ENCODE measurements at regions of chr22 and their contacts with region 1.

Region 1: GRCh38 chr22:42419243-42419881 is 12.8 kb downstream of the NFAM1 start:
- DNase-seq: no peak
- ATAC-seq: no peak
- H3K4me3 ChIP-seq: no peak overlapping the region
- H3K4me3 Mint-ChIP-seq: no peak overlapping the region
- H3K27ac ChIP-seq: no peak overlapping the region
- H3K27ac Mint-ChIP-seq: no peak overlapping the region
- H3K4me1 ChIP-seq: no peaks in the 10 kb centered on the region
- H3K4me1 Mint-ChIP-seq: peaks cover 2% of the 10 kb centered on the region
- H3K27me3 ChIP-seq: no peaks in the 10 kb centered on the region
- H3K27me3 Mint-ChIP-seq: no peaks in the 10 kb centered on the region
- CTCF ChIP-seq: no peak

Region 2: DNA sequence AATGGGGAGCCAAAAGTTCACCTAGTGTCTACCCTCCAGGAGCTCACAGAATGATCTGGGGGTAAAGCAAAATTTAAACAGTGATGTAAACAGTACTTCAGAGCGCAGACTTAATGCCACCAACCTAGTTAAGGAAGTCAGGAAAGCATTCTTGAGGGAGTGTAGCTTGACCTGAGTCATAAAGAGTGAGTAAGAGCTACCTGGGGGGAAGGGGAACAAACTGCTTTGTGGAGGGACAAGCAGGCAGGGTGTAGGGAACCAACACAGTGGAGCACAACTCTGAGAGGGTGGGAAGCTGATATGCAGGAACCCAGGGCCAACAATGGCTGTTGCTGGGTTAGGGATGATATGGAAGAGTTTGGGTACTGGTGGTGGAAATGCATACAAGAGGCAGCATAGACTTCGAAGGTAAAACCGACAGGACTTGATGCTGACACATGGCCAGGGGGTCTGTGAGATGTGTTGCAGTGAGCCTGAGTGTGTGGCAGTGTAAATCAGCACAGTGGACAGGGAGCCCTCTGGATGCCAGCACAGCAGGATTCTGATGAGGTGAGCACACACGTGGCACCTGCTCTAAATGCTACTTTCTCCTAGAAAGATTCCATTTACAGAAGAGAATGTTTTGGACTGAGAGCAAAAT is 230.4 kb before region 1 on chr22:
- CTCF ChIA-PET with region 1: no interaction called
- POLR2A ChIA-PET with region 1: no interaction called
- intact Hi-C with region 1: no loop called
- DNase-seq: no peak
- ATAC-seq: no peak
- H3K4me3 ChIP-seq: no peak overlapping the region
- H3K4me3 Mint-ChIP-seq: no peak overlapping the region
- H3K27ac ChIP-seq: no peak overlapping the region
- H3K27ac Mint-ChIP-seq: no peak overlapping the region
- H3K4me1 ChIP-seq: peaks cover 6% of the 10 kb centered on the region
- H3K4me1 Mint-ChIP-seq: peaks cover 68% of the 10 kb centered on the region
- H3K27me3 ChIP-seq: no peaks in the 10 kb centered on the region
- H3K27me3 Mint-ChIP-seq: no peaks in the 10 kb centered on the region
- CTCF ChIP-seq: no peak

Region 3: GRCh38 chr22:42331014-42331413 is 88.3 kb before region 1 on chr22:
- CTCF ChIA-PET with region 1: no interaction called
- POLR2A ChIA-PET with region 1: no interaction called
- intact Hi-C with region 1: no loop called
- DNase-seq: peak in 1 of 9 experiments; percentile 14
- ATAC-seq: no peak
- H3K4me3 ChIP-seq: no peak overlapping the region
- H3K4me3 Mint-ChIP-seq: no peak overlapping the region
- H3K27ac ChIP-seq: no peak overlapping the region
- H3K27ac Mint-ChIP-seq: no peak overlapping the region
- H3K4me1 ChIP-seq: peaks cover 28% of the 10 kb centered on the region
- H3K4me1 Mint-ChIP-seq: peaks cover 43% of the 10 kb centered on the region
- H3K27me3 ChIP-seq: no peaks in the 10 kb centered on the region
- H3K27me3 Mint-ChIP-seq: no peaks in the 10 kb centered on the region
- CTCF ChIP-seq: no peak

Region 4: GRCh38 chr22:42399315-42400271 is 19.8 kb before region 1 on chr22:
- CTCF ChIA-PET with region 1: interaction called, 3 read pairs
- POLR2A ChIA-PET with region 1: no interaction called
- intact Hi-C with region 1: loop called in 1 of 2 experiments (anchors 1 kb)
- DNase-seq: no peak
- ATAC-seq: no peak
- H3K4me3 ChIP-seq: no peak overlapping the region
- H3K4me3 Mint-ChIP-seq: no peak overlapping the region
- H3K27ac ChIP-seq: no peak overlapping the region
- H3K27ac Mint-ChIP-seq: no peak overlapping the region
- H3K4me1 ChIP-seq: peaks cover 8% of the 10 kb centered on the region
- H3K4me1 Mint-ChIP-seq: peaks cover 10% of the 10 kb centered on the region
- H3K27me3 ChIP-seq: no peaks in the 10 kb centered on the region
- H3K27me3 Mint-ChIP-seq: no peaks in the 10 kb centered on the region
- CTCF ChIP-seq: no peak

Measured in CD8-positive, alpha-beta T cell (primary cell).